Naive thymus-derived CD4-positive, alpha-beta T cell (primary cell): ENCODE measurements at regions of chr4 and their contacts with region 1.

Region 1: DNA sequence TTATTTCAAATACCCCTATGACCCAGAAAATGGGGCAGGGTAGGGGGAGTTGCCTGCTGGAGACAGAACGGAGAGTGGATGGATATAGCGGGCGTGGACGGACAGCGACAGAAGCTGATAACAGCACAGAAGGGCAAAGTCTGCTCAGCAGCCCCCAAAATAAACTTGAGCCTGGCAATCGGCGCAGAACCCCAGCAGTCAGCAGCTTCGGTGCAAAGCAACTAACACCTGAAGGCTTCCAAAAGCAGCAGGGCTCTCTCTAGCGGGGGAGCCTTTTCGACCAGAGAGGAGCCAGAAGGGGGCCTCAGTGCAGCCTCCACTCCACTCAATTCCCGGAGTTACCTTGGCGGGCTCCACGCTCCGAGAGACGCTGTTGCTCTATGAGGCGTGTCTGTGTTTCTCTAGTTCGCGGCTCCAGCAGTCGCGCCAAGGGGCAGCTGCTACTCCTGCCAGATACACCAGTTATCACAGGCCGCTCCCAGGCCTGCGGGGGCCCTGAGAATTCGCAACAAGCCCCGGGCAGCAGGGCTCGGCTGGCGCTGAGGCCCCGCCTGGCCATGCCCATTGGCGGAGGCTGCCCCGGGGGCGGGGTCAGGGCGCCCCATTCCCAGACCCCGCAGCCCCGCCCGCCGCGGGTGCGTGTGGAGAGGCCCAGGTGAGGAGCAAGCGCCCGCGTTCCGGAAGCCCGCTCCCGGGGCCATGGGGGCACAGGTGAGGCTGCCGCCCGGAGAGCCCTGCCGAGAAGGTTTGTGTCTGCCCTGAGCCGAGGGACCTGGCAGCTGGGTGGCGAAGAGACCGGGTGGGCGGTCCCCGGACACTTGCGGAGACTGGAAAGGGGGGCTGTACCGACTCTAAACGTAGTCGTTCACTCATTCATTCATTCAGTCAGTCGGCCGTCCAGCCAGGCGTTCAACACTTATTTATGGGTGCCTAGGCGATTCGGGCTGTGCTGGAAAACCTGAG is at the starts of genes CNGA1 and NIPAL1:
- DNase-seq: peak; percentile 56 to 79 (median 65)
- ATAC-seq: peak; percentile 96
- H3K4me3 ChIP-seq: peak within 1 kb of the TSS; percentile 75
- H3K4me3 Mint-ChIP-seq: peak within 1 kb of the TSS; percentile 78 to 95 (median 86)
- H3K27ac ChIP-seq: peak within 1 kb of the TSS; percentile 17
- H3K27ac Mint-ChIP-seq: peak within 1 kb of the TSS in 5 of 9 donors; percentile 7 to 91 (median 50)
- H3K4me1 ChIP-seq: peaks cover 0 to 8% of the 10 kb centered on the region in 2 donors
- H3K4me1 Mint-ChIP-seq: peaks cover 6 to 12% (median 10%) of the 10 kb centered on the region in 7 donors
- H3K27me3 ChIP-seq: no peaks in the 10 kb centered on the region
- H3K27me3 Mint-ChIP-seq: peaks cover 3 to 32% (median 11%) of the 10 kb centered on the region in 5 donors
- total RNA-seq, gene CNGA1: not detected
- total RNA-seq, gene NIPAL1: 0.45 to 3.3 (median 1.9) TPM in 4 of 5 experiments, not detected in the other

Region 2: GRCh38 chr4:47485047-47485692 is 531.3 kb before region 1 on chr4 and contains the start of gene ATP10D:
- CTCF ChIA-PET with region 1: no interaction called
- POLR2A ChIA-PET with region 1: no interaction called
- intact Hi-C with region 1: loop called in 1 of 2 experiments (anchors 10 kb)
- DNase-seq: peak; percentile 56 to 77 (median 66)
- ATAC-seq: peak; percentile 97
- H3K4me3 ChIP-seq: peak within 1 kb of the TSS; percentile 75
- H3K4me3 Mint-ChIP-seq: peak within 1 kb of the TSS; percentile 87 to 98 (median 94)
- H3K27ac ChIP-seq: peak within 1 kb of the TSS; percentile 70
- H3K27ac Mint-ChIP-seq: peak within 1 kb of the TSS; percentile 78 to 97 (median 89)
- H3K4me1 ChIP-seq: peaks cover 7 to 9% of the 10 kb centered on the region in 2 donors
- H3K4me1 Mint-ChIP-seq: peaks cover 15 to 36% (median 26%) of the 10 kb centered on the region in 7 donors
- H3K27me3 ChIP-seq: no peaks in the 10 kb centered on the region
- H3K27me3 Mint-ChIP-seq: peaks cover 0 to 5% (median 0%) of the 10 kb centered on the region in 5 donors
- total RNA-seq, gene ATP10D: 3.3 to 29.0 (median 6.1) TPM

Region 3: DNA sequence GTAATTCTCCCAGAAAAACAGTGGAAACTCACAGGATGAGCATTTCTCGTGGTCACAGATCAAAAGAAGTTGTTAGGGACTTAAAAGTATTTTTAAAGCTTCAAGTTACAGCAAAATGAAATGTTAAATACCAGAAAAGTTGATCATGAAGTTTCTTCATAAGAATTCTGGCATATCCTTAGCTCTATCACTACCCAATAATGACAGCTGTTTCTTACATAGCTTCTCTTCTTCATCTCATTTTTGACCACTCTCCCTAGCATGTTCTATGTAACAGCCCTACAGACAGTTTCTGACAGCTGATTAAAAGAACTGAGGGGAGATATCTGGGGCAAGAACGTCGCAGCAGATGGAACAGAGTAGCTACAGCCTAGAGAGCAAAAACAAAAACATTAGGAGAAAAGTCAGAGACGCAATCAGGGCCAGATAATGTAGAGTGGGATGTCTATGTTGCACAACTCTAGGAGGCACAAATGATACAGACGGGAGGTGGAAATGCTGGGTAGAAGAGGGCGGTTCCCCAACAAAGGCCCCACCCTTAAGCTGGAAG is 287.2 kb before region 1 on chr4:
- CTCF ChIA-PET with region 1: no interaction called
- POLR2A ChIA-PET with region 1: no interaction called
- intact Hi-C with region 1: no loop called
- DNase-seq: no peak
- ATAC-seq: no peak
- H3K4me3 ChIP-seq: no peak overlapping the region
- H3K4me3 Mint-ChIP-seq: no peak overlapping the region
- H3K27ac ChIP-seq: no peak overlapping the region
- H3K27ac Mint-ChIP-seq: no peak overlapping the region
- H3K4me1 ChIP-seq: no peaks in the 10 kb centered on the region
- H3K4me1 Mint-ChIP-seq: no peaks in the 10 kb centered on the region
- H3K27me3 ChIP-seq: no peaks in the 10 kb centered on the region
- H3K27me3 Mint-ChIP-seq: peaks cover 12 to 37% (median 32%) of the 10 kb centered on the region in 5 donors

Region 4: DNA sequence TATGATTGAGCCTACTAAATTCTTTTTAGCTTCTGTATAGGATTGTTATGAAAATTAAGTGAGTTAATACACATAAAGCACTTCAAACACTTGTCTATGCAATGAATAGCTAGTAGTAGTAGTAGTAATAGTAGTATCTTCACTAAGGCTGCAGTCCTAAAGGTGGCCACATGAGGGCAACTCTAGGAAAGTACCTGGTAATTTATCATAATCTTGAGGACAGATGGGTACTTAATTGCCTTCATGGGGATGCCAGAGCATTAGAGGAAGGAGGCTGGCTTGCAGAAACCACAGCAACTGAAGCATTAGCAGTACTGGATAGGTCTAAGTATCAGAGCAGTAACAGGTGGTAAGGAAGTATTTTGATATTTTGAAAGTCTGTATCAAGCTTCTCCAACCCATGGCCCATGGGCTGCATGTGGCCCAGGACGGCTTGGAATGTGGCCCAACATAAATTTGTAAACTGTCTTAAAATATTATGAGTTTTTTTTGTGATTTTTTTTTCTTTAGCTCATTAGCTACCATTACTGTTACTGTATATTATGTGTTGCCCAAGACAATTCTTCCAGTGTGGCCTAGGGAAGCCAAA is 17.5 kb after region 1 on chr4:
- CTCF ChIA-PET with region 1: interaction called, 5 read pairs
- POLR2A ChIA-PET with region 1: no interaction called
- intact Hi-C with region 1: loop called in 1 of 2 experiments (anchors 1 kb)
- DNase-seq: peak in 7 of 9 donors; percentile 21 to 55 (median 52)
- ATAC-seq: peak; percentile 91
- H3K4me3 ChIP-seq: no peak overlapping the region
- H3K4me3 Mint-ChIP-seq: no peak overlapping the region
- H3K27ac ChIP-seq: no peak overlapping the region
- H3K27ac Mint-ChIP-seq: no peak overlapping the region
- H3K4me1 ChIP-seq: peaks cover 3 to 4% of the 10 kb centered on the region in 2 donors
- H3K4me1 Mint-ChIP-seq: peaks cover 4 to 22% (median 15%) of the 10 kb centered on the region in 7 donors
- H3K27me3 ChIP-seq: no peaks in the 10 kb centered on the region
- H3K27me3 Mint-ChIP-seq: no peaks in the 10 kb centered on the region

Region 5: GRCh38 chr4:48047421-48047844 is 31.0 kb after region 1 on chr4:
- CTCF ChIA-PET with region 1: no interaction called
- POLR2A ChIA-PET with region 1: no interaction called
- intact Hi-C with region 1: loop called in 1 of 2 experiments (anchors 2 kb)
- DNase-seq: peak in 8 of 9 donors; percentile 7 to 74 (median 32)
- ATAC-seq: peak; percentile 89
- H3K4me3 ChIP-seq: no peak overlapping the region
- H3K4me3 Mint-ChIP-seq: peak overlapping the region; percentile 38 to 83 (median 72)
- H3K27ac ChIP-seq: no peak overlapping the region
- H3K27ac Mint-ChIP-seq: peak overlapping the region in 7 of 9 donors; percentile 2 to 66 (median 45)
- H3K4me1 ChIP-seq: peaks cover 28 to 34% of the 10 kb centered on the region in 2 donors
- H3K4me1 Mint-ChIP-seq: peaks cover 35 to 61% (median 47%) of the 10 kb centered on the region in 7 donors
- H3K27me3 ChIP-seq: no peaks in the 10 kb centered on the region
- H3K27me3 Mint-ChIP-seq: peaks cover 0 to 79% (median 0%) of the 10 kb centered on the region in 5 donors

Region 6: GRCh38 chr4:48173056-48173991 is 156.9 kb after region 1 on chr4:
- CTCF ChIA-PET with region 1: no interaction called
- POLR2A ChIA-PET with region 1: no interaction called
- intact Hi-C with region 1: no loop called
- DNase-seq: no peak
- ATAC-seq: peak; percentile 46
- H3K4me3 ChIP-seq: no peak overlapping the region
- H3K4me3 Mint-ChIP-seq: no peak overlapping the region
- H3K27ac ChIP-seq: no peak overlapping the region
- H3K27ac Mint-ChIP-seq: no peak overlapping the region
- H3K4me1 ChIP-seq: no peaks in the 10 kb centered on the region
- H3K4me1 Mint-ChIP-seq: peaks cover 0 to 12% (median 0%) of the 10 kb centered on the region in 7 donors
- H3K27me3 ChIP-seq: no peaks in the 10 kb centered on the region
- H3K27me3 Mint-ChIP-seq: no peaks in the 10 kb centered on the region

Region 7: DNA sequence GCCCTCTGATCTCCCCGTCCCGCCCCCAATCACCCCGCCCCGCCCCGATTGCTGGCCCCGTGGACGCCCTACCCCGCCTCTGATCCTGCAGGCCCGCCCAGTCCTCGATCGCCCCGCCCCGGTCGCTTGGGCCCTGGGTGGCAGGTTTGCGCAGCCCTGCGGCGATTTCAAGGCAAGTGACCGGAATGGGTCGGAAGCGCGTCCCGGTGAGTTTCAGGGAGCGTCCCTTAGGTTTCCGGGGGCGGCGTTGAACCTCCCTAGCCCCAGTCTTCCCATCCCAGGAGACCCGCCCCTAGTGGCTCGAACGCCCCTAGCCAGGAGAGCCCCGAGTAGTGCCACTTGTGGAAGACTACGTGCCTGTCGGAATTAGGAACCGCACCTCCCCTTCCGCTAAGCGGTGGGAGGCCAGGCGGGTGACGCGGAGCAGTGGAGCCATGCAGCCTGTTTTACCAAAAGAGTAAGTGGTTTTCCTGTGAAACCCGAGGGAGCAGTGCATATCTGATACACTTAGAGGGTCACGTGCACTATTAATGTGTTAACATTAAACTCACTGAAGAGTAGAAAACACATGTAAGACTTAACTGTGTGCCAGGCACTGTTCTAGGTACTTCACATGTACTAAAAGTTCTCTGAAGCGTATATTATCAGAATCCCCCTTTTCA is 253.6 kb after region 1 on chr4:
- CTCF ChIA-PET with region 1: no interaction called
- POLR2A ChIA-PET with region 1: no interaction called
- intact Hi-C with region 1: loop called (anchors 5 kb)
- DNase-seq: peak; percentile 48 to 88 (median 69)
- ATAC-seq: peak; percentile 95
- H3K4me3 ChIP-seq: peak overlapping the region; percentile 88
- H3K4me3 Mint-ChIP-seq: peak overlapping the region; percentile 95 to 98 (median 97)
- H3K27ac ChIP-seq: peak overlapping the region; percentile 73
- H3K27ac Mint-ChIP-seq: peak overlapping the region; percentile 20 to 94 (median 86)
- H3K4me1 ChIP-seq: peaks cover 0 to 6% of the 10 kb centered on the region in 2 donors
- H3K4me1 Mint-ChIP-seq: peaks cover 6 to 28% (median 22%) of the 10 kb centered on the region in 7 donors
- H3K27me3 ChIP-seq: no peaks in the 10 kb centered on the region
- H3K27me3 Mint-ChIP-seq: no peaks in the 10 kb centered on the region